GM12878 (cell line): ENCODE measurements at regions of chr11 and their contacts with region 1.

Region 1: DNA sequence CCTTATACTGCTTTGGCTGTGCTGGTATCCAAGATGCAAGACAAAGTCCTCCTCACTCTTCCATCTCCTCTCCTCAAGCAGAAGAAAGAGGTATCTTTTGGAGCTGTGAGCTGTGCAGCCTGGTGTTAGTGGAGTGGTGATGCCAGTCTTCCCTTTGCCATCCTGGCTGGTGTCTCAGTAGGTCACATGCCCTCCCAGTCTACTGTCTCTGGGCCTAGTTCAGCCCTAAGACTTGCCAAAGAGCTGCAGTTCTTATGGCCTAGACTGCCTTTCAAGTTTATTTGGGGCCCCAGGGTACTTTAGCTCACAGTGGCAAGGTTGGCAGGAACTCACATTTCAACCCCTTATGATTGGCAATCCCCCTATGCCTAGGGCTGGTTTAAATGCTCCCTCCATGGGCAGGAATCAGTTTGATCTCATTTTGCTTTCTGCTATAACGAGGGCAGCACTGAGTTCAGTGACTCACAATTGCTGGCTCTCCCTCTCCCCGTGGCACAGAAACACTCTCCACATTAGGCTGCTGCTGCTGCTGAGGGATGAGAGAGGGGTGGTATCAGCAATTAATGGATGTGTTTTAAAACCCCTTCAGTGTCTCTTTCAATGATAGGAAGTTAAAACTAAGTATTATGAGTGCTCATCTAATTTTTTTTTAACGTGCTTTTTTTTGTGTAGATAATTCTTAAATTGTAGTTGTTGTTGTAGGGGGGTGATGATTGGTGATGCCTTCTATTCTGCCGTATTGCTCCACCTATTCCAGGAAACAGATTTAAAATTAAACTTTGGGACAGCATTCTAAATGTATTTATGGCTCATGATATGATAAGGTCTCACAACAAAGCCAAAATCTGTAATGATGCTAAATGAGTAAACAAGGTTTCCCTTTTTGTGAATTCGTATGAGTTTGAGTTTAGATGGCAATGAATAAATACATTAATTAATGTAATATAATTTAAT is 1295.0 kb downstream of the JRKL start:
- DNase-seq: no peak
- ATAC-seq: no peak
- H3K4me3 ChIP-seq: no peak overlapping the region
- H3K27ac ChIP-seq: no peak overlapping the region
- H3K4me1 ChIP-seq: no peaks in the 10 kb centered on the region
- H3K27me3 ChIP-seq: no peaks in the 10 kb centered on the region
- CTCF ChIP-seq: no peak
- EP300 ChIP-seq: no peak
- POLR2A ChIP-seq: no peak
- RAD21 ChIP-seq: no peak

Region 2: GRCh38 chr11:97739932-97740800 is 55.4 kb after region 1 on chr11:
- CTCF ChIA-PET with region 1: no interaction called
- POLR2A ChIA-PET with region 1: no interaction called
- RAD21 ChIA-PET with region 1: no interaction called
- SMC1A ChIA-PET with region 1: no interaction called
- in situ Hi-C with region 1: no loop called
- intact Hi-C with region 1: loop called (anchors 5 kb)
- DNase-seq: no peak
- ATAC-seq: no peak
- H3K4me3 ChIP-seq: no peak overlapping the region
- H3K27ac ChIP-seq: no peak overlapping the region
- H3K4me1 ChIP-seq: no peaks in the 10 kb centered on the region
- H3K27me3 ChIP-seq: no peaks in the 10 kb centered on the region
- CTCF ChIP-seq: no peak
- EP300 ChIP-seq: no peak
- POLR2A ChIP-seq: no peak
- RAD21 ChIP-seq: no peak